MCF 10A (cell line): ENCODE measurements at regions of chr12 and their contacts with region 1.

Region 1: GRCh38 chr12:65602610-65603295 is 221.5 kb upstream of the HMGA2 start:
- DNase-seq: peak; percentile 97
- H3K4me3 Mint-ChIP-seq: peak overlapping the region; percentile 81
- H3K27ac Mint-ChIP-seq: peak overlapping the region; percentile 42
- H3K4me1 Mint-ChIP-seq: peaks cover 46% of the 10 kb centered on the region
- H3K27me3 Mint-ChIP-seq: no peaks in the 10 kb centered on the region
- CTCF ChIP-seq: peak; percentile 67

Region 2: DNA sequence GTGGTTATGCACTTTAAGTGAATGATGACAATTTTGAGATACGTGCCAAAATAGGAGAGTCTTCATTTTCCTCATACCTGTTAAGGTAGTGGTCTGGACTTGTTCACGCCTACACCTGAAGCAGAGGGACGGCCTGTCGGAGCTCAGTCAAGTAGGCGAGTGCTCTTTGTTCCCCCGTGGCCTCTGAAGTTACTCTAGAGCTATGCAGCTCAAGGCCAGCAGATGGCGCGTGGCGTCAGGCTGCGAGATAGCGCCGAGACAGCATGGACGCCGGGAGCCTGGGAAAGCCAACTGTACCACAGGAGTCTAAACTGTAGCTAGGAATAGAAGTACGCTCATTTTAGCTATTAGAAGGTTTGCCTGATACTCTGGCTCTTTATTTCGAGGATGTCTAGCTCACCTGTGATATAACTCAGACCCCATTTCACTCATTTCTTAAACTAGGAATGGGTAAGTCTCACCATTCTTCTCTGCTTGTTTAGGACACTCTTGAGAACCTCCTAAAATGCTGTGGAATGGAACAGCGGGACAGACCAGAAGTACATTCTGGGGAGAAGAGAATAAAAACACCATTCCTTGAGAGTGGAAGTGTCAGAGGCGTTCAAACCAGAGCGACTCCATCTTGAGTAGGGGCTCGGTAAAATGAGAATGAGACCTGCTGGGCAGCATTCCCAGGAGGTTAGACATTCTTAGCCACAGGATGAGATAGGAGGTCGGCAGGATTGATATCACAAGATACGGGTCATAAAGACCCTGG is 45.9 kb before region 1 on chr12:
- CTCF ChIA-PET with region 1: interaction called, 23 read pairs
- POLR2A ChIA-PET with region 1: interaction called, 14 read pairs
- intact Hi-C with region 1: loop called (anchors 1 kb)
- DNase-seq: peak; percentile 88
- H3K4me3 Mint-ChIP-seq: no peak overlapping the region
- H3K27ac Mint-ChIP-seq: peak overlapping the region; percentile 49
- H3K4me1 Mint-ChIP-seq: peaks cover 6% of the 10 kb centered on the region
- H3K27me3 Mint-ChIP-seq: no peaks in the 10 kb centered on the region
- CTCF ChIP-seq: peak; percentile 89

Region 3: GRCh38 chr12:65631621-65632111 is 28.9 kb after region 1 on chr12:
- CTCF ChIA-PET with region 1: interaction called, 7 read pairs
- POLR2A ChIA-PET with region 1: interaction called, 26 read pairs
- intact Hi-C with region 1: loop called (anchors 1 kb)
- DNase-seq: peak; percentile 100
- H3K4me3 Mint-ChIP-seq: peak overlapping the region; percentile 11
- H3K27ac Mint-ChIP-seq: peak overlapping the region; percentile 86
- H3K4me1 Mint-ChIP-seq: peaks cover 63% of the 10 kb centered on the region
- H3K27me3 Mint-ChIP-seq: no peaks in the 10 kb centered on the region
- CTCF ChIP-seq: no peak

Region 4: GRCh38 chr12:65673732-65674131 is 71.0 kb after region 1 on chr12:
- CTCF ChIA-PET with region 1: interaction called, 76 read pairs
- POLR2A ChIA-PET with region 1: interaction called, 23 read pairs
- intact Hi-C with region 1: loop called (anchors 1 kb)
- DNase-seq: peak; percentile 60
- H3K4me3 Mint-ChIP-seq: no peak overlapping the region
- H3K27ac Mint-ChIP-seq: peak overlapping the region; percentile 88
- H3K4me1 Mint-ChIP-seq: peaks cover 29% of the 10 kb centered on the region
- H3K27me3 Mint-ChIP-seq: no peaks in the 10 kb centered on the region
- CTCF ChIP-seq: peak; percentile 25

Region 5: DNA sequence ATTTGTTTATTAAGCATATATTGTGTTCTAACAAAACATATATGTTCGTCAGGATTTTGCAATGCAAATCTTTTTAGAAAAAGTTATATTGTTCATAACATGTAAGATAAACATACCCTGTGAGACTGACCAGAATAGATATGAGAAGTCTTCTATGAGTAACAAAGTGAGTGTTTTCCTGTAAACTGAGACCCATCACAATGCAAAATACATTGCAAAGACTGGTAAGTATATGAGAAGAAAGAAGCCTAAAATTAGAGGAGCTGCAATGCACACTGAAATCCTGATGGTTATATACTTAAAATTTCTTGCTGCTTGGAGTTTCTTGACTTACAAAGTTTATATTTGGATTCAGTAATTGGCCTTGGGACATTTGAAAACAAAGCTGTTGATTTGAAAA is 227.6 kb after region 1 on chr12:
- CTCF ChIA-PET with region 1: interaction called, 15 read pairs
- POLR2A ChIA-PET with region 1: interaction called, 29 read pairs
- intact Hi-C with region 1: no loop called
- DNase-seq: peak; percentile 41
- H3K4me3 Mint-ChIP-seq: peak overlapping the region; percentile 94
- H3K27ac Mint-ChIP-seq: peak overlapping the region; percentile 90
- H3K4me1 Mint-ChIP-seq: peaks cover 30% of the 10 kb centered on the region
- H3K27me3 Mint-ChIP-seq: no peaks in the 10 kb centered on the region
- CTCF ChIP-seq: no peak

Region 6: DNA sequence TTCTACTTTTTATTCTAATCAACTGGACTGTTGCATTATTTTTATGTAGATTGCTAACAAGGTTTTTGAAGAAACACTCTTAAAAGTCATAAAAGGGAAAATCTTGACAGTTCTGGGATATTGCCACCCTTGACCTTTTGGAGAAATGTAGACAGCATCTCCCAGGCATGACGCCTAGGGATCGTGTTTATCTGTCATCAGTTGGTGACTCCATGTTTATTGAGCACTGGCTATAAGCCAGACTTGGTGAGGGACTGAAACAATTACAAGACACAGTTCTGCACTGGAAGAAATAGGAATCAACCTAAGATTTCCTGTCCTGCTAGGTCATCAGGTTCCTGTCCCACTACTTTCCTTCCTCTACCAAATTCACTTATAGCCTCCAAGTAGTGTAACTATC is 256.1 kb after region 1 on chr12:
- CTCF ChIA-PET with region 1: no interaction called
- POLR2A ChIA-PET with region 1: no interaction called
- intact Hi-C with region 1: no loop called
- DNase-seq: no peak
- H3K4me3 Mint-ChIP-seq: no peak overlapping the region
- H3K27ac Mint-ChIP-seq: peak overlapping the region; percentile 60
- H3K4me1 Mint-ChIP-seq: peaks cover 28% of the 10 kb centered on the region
- H3K27me3 Mint-ChIP-seq: no peaks in the 10 kb centered on the region
- CTCF ChIP-seq: no peak

Region 7: DNA sequence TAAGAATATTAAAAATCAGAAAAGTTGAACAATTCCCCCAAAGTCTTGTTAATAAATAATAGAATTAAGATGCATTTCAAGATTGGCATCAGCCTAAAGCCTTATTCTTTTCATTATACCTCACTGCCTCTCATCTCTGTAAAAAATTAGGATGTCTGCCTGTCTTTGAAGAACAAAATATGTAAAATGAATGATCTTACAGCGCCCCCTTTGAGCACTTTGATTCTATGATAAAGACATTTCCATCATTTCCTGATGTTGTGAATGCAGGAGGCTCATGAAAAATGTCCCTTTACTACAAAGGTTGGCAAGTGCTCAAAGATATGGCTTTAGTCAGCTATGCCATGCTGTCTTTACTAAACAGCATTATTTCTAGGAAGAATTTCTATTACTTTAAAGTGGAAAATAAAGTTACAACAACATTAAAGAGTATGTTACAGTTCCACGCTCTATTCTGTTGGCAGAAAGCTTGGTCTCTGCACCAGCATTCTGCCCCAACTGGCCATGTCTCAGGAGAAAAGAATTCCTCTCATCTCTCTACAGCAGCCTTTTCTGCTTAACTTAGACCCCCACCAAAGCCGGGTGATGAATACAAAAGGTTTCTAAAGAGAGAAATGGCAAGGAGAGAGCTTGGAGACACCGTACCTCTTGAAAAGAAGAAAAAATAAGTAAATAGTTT is 432.7 kb after region 1 on chr12:
- CTCF ChIA-PET with region 1: interaction called, 3 read pairs
- POLR2A ChIA-PET with region 1: no interaction called
- intact Hi-C with region 1: loop called (anchors 1 kb)
- DNase-seq: peak; percentile 68
- H3K4me3 Mint-ChIP-seq: no peak overlapping the region
- H3K27ac Mint-ChIP-seq: no peak overlapping the region
- H3K4me1 Mint-ChIP-seq: peaks cover 23% of the 10 kb centered on the region
- H3K27me3 Mint-ChIP-seq: no peaks in the 10 kb centered on the region
- CTCF ChIP-seq: peak; percentile 51